AG04449 (cell line): ENCODE measurements at regions of chr11 and their contacts with region 1.

Region 1: GRCh38 chr11:131694526-131695424 is 324.4 kb downstream of the NTM start:
- DNase-seq: no peak
- H3K4me3 ChIP-seq: no peak overlapping the region
- CTCF ChIP-seq: peak; percentile 100

Region 2: GRCh38 chr11:131710511-131710910 is 15.7 kb after region 1 on chr11:
- CTCF ChIA-PET with region 1: interaction called, 137 read pairs
- POLR2A ChIA-PET with region 1: no interaction called
- DNase-seq: no peak
- H3K4me3 ChIP-seq: no peak overlapping the region
- CTCF ChIP-seq: no peak

Region 3: DNA sequence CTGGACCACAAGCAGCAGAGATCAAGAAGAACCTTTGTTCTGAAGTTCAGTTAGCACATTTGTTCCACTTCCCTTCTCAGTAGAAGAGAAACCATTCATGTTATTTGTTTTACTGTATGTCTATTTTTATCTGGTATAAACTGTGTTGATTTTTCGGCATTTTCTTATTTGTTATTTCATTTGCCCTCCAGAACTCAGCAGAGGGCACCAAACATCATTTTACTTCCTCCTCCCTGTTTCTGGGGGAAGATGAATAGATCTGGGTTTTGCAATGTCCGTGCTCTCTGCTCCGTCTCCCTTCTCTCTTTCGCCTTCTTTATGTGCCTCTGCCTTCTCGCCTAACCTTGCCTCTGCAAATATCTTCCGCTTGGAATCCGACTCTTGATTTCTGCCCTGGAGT is 42.6 kb after region 1 on chr11:
- CTCF ChIA-PET with region 1: interaction called, 29 read pairs
- POLR2A ChIA-PET with region 1: no interaction called
- DNase-seq: no peak
- H3K4me3 ChIP-seq: no peak overlapping the region
- CTCF ChIP-seq: no peak

Region 4: DNA sequence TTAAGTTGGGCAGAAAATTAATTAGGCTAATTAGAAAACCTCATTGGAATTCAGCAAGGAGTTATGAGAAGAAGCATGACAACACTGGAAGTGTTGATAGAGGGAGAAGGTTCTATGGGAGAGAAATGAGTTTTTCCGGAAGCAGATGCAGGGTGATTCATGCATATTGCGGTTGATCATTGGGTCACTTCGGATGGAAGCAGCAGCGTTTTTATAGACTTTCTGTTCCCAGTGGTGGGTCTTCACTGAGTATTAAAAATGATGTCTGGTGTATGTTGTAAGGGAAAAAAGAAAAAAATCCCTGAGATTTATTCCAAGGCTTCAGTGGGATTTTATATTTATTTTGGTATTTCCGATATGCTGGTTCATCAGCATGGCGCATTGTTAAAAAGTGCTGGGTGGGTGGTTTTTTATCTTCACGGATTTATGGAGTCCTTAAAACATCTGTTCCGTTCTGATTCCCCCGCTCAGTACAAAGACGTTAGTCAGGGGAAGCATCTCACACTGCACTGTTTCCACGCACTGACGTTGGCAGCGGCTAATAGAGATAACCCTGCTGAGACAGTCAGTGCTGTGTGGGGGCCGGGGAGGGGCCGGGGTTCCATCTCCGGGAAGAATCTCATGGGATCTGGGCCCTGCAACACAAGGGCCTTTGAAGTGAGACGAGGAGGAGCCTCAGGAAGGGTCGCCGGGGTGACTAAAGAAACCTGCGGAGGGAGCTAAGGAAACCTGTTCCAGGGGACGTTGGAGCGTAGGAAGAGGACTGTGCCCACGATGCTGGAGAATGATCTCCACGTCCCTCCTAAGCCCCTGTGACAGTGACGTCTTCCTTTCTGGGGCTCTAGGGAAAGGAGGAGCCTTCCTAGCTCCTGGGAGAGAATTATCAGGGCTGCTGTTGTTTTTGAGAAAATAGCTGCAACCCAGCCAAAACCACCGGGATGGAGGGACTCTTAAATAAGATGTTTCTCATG is 65.6 kb after region 1 on chr11:
- CTCF ChIA-PET with region 1: interaction called, 15 read pairs
- POLR2A ChIA-PET with region 1: no interaction called
- DNase-seq: no peak
- H3K4me3 ChIP-seq: peak overlapping the region; percentile 27
- CTCF ChIP-seq: no peak

Region 5: DNA sequence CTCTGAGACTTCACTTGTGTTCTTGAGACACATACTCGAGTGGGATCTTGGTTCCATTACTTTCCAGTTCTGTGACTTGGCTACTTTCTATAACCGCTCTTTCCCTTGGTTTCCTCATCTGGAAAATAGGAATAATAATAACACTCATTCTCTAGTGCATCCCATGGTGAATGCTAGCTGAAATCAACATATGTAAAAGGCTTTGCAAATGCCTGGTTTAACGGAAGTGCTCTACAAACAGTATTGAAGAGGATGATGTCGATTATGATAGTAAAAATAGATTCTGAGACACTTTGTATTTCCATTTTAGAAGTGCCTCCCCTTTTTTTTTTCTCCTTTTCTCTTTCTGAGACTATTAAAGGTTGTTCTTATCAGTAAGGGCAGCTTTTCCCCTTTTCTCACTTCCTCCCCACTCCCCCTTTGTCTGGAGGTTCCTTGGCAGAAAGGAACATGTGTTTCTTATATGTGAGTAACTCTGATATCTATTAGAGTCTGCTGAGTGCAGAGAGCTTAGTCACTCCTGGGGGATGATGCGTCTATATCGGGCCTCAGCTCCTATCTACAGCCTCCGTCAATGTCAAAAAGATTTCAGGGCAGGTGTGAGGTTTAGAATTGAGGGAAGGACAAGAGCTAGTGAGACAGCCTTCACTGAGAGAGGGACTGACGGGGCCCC is 164.9 kb after region 1 on chr11:
- CTCF ChIA-PET with region 1: interaction called, 43 read pairs
- POLR2A ChIA-PET with region 1: no interaction called
- DNase-seq: no peak
- H3K4me3 ChIP-seq: no peak overlapping the region
- CTCF ChIP-seq: no peak

Region 6: GRCh38 chr11:131889146-131889577 is 194.4 kb after region 1 on chr11:
- CTCF ChIA-PET with region 1: interaction called, 10 read pairs
- POLR2A ChIA-PET with region 1: interaction called, 3 read pairs
- DNase-seq: peak; percentile 80
- H3K4me3 ChIP-seq: no peak overlapping the region
- CTCF ChIP-seq: no peak

Region 7: DNA sequence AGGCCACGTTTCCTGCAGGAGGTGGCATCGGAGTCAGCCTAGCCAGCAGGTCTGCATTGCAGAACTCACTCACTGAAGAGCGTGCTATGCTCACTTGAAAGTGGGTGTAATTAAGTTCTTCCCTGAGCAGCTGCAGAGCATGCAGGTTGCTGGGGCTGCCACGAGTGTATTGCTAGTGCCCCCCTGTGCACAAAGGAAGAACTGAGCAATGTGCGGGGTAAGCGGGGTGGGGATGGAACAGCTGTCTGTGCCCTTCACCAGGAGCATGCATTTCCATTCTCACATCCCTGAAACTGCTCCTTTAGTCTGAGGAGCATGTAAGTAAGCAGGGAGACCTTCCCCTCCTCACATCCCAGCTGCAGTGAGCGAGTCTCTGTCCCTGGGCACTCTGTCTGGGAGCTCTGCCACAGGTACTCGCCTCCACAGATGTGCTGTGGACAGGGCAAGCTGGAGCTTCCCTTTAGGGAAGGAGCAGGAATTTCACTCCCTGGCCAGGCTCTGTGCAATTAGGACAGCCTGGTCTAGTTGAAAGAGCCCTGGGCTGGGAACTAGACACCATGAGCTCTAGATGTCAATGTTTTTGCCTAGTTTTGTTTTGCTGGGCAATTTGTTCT is 707.4 kb after region 1 on chr11:
- CTCF ChIA-PET with region 1: interaction called, 16 read pairs
- POLR2A ChIA-PET with region 1: no interaction called
- DNase-seq: no peak
- H3K4me3 ChIP-seq: no peak overlapping the region
- CTCF ChIP-seq: peak; percentile 77